GM23248 (cell line): ENCODE measurements at regions of chr3 and their contacts with region 1.

Region 1: DNA sequence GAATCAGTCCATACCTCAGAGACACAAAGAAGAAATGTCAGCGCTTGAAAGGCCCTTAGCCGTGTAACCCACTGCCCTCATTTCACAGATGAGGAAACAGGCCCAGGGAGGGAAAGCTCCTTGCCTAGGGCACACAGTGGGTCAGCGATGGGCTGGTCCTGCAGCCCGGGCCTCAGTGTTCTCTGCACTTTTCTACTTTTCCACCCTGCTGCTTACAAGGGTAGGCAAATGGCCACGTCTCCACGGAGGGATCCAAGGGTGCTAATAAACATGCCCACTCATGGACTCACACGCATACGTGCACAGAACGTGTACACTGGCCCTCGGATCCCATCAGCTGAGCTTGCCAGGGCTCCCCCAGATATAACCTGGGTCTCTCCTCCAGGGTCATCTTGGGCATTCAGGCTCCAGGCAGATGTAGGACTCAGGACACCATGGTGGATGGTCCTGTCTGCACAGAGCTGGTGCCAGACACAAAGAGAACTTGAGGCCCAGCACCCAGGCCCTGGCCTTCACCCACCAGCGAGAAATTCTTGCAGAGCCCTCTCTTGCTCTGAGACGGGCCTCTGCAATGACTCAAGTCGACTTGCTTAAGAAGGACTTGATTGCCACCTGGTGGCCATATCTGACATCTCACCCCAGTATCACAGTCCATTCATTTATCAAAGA is 34.5 kb upstream of the VPS8 start:
- DNase-seq: peak; percentile 96
- H3K4me3 ChIP-seq: no peak overlapping the region
- H3K27ac ChIP-seq: no peak overlapping the region
- H3K4me1 ChIP-seq: peaks cover 25% of the 10 kb centered on the region
- H3K27me3 ChIP-seq: no peaks in the 10 kb centered on the region; the same call in 1 of the 2 replicates

Region 2: DNA sequence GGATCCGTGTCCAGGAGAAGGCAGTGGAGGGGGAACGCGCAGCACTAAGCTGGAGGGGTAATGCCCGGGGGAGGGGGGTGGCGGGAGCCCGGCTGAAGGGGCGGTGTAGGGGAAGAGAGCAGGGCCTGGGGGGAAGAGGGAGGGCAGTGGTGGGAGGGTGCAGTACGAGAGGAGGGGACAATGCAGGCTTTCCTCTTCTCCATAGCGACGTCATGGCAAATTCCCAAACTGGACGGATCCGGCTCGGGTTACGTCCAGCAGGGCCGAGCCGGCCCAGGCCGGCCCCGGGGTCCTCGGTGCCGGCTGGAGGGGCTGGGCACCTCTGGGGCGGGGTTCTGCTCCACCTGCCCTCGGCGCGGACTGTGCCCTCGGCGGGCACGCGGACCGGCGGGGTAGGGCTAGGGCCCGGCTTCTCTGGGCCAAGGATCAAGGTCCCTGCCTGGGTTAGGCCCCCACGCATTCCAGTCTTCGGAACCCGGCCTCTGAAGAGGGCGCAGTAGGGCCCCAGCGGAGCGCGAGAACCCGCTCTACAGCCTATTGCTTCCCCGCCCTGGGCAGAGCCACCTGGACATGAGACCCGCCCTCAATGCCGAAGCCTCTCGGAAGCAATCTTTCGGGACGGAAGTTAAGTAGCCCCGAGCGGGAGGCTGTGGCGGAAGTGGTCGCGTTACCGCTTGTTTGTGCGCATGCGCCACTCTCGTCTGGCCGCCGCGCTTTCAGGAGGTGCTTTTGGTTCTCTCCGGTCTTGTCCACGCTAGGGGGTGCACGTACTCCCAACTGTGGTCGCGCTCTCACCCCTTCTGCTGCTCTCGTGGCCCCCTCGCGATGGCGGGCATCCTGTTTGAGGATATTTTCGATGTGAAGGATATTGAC is 414.6 kb before region 1 on chr3:
- in situ Hi-C with region 1: loop called (anchors 25 kb)
- DNase-seq: peak; percentile 99
- H3K4me3 ChIP-seq: peak overlapping the region; percentile 85
- H3K27ac ChIP-seq: peak overlapping the region; percentile 98
- H3K4me1 ChIP-seq: peaks cover 19% of the 10 kb centered on the region
- H3K27me3 ChIP-seq: no peaks in the 10 kb centered on the region